Naive thymus-derived CD4-positive, alpha-beta T cell (primary cell): ENCODE measurements at regions of chr5 and their contacts with region 1.

Region 1: GRCh38 chr5:140647042-140647341 is 438 bp downstream of the NDUFA2 start:
- DNase-seq: no peak
- ATAC-seq: no peak
- H3K4me3 ChIP-seq: peak overlapping the region; percentile 80
- H3K4me3 Mint-ChIP-seq: peak overlapping the region; percentile 88 to 100 (median 98)
- H3K27ac ChIP-seq: peak overlapping the region; percentile 95
- H3K27ac Mint-ChIP-seq: peak overlapping the region; percentile 93 to 100 (median 99)
- H3K4me1 ChIP-seq: peaks cover 18% of the 10 kb centered on the region in 2 donors
- H3K4me1 Mint-ChIP-seq: peaks cover 32 to 72% (median 61%) of the 10 kb centered on the region in 7 donors
- H3K27me3 ChIP-seq: no peaks in the 10 kb centered on the region
- H3K27me3 Mint-ChIP-seq: no peaks in the 10 kb centered on the region

Region 2: GRCh38 chr5:140557136-140557805 is 89.7 kb before region 1 on chr5 and contains the start of gene SRA1:
- CTCF ChIA-PET with region 1: interaction called, 3 read pairs
- POLR2A ChIA-PET with region 1: interaction called, 10 read pairs
- intact Hi-C with region 1: loop called in 1 of 2 experiments (anchors 2 kb)
- DNase-seq: peak; percentile 62 to 91 (median 72)
- ATAC-seq: peak; percentile 94
- H3K4me3 ChIP-seq: peak within 1 kb of the TSS; percentile 73
- H3K4me3 Mint-ChIP-seq: peak within 1 kb of the TSS; percentile 84 to 93 (median 92)
- H3K27ac ChIP-seq: peak within 1 kb of the TSS; percentile 97
- H3K27ac Mint-ChIP-seq: peak within 1 kb of the TSS; percentile 85 to 97 (median 95)
- H3K4me1 ChIP-seq: peaks cover 14 to 20% of the 10 kb centered on the region in 2 donors
- H3K4me1 Mint-ChIP-seq: peaks cover 45 to 63% (median 50%) of the 10 kb centered on the region in 7 donors
- H3K27me3 ChIP-seq: no peaks in the 10 kb centered on the region
- H3K27me3 Mint-ChIP-seq: no peaks in the 10 kb centered on the region
- total RNA-seq, gene SRA1: 23.8 to 45.5 (median 34.0) TPM

Region 3: GRCh38 chr5:140632150-140633020 is 14.6 kb before region 1 on chr5:
- CTCF ChIA-PET with region 1: interaction called, 5 read pairs
- POLR2A ChIA-PET with region 1: interaction called, 34 read pairs
- intact Hi-C with region 1: loop called in 1 of 2 experiments (anchors 1 kb)
- DNase-seq: peak; percentile 29 to 64 (median 51)
- ATAC-seq: peak; percentile 81
- H3K4me3 ChIP-seq: peak overlapping the region; percentile 87
- H3K4me3 Mint-ChIP-seq: peak overlapping the region; percentile 89 to 99 (median 92)
- H3K27ac ChIP-seq: peak overlapping the region; percentile 41
- H3K27ac Mint-ChIP-seq: peak overlapping the region; percentile 29 to 88 (median 79)
- H3K4me1 ChIP-seq: peaks cover 0 to 9% of the 10 kb centered on the region in 2 donors
- H3K4me1 Mint-ChIP-seq: peaks cover 16 to 36% (median 17%) of the 10 kb centered on the region in 7 donors
- H3K27me3 ChIP-seq: no peaks in the 10 kb centered on the region
- H3K27me3 Mint-ChIP-seq: peaks cover 0 to 26% (median 0%) of the 10 kb centered on the region in 5 donors

Region 4: GRCh38 chr5:140658870-140659269 is 11.9 kb after region 1 on chr5:
- CTCF ChIA-PET with region 1: no interaction called
- POLR2A ChIA-PET with region 1: interaction called, 41 read pairs
- intact Hi-C with region 1: loop called (anchors 1 kb)
- DNase-seq: no peak
- ATAC-seq: no peak
- H3K4me3 ChIP-seq: no peak overlapping the region
- H3K4me3 Mint-ChIP-seq: no peak overlapping the region
- H3K27ac ChIP-seq: no peak overlapping the region
- H3K27ac Mint-ChIP-seq: peak overlapping the region in 6 of 9 donors; percentile 4 to 84 (median 50)
- H3K4me1 ChIP-seq: no peaks in the 10 kb centered on the region
- H3K4me1 Mint-ChIP-seq: peaks cover 7 to 18% (median 11%) of the 10 kb centered on the region in 7 donors
- H3K27me3 ChIP-seq: no peaks in the 10 kb centered on the region
- H3K27me3 Mint-ChIP-seq: no peaks in the 10 kb centered on the region

Region 5: DNA sequence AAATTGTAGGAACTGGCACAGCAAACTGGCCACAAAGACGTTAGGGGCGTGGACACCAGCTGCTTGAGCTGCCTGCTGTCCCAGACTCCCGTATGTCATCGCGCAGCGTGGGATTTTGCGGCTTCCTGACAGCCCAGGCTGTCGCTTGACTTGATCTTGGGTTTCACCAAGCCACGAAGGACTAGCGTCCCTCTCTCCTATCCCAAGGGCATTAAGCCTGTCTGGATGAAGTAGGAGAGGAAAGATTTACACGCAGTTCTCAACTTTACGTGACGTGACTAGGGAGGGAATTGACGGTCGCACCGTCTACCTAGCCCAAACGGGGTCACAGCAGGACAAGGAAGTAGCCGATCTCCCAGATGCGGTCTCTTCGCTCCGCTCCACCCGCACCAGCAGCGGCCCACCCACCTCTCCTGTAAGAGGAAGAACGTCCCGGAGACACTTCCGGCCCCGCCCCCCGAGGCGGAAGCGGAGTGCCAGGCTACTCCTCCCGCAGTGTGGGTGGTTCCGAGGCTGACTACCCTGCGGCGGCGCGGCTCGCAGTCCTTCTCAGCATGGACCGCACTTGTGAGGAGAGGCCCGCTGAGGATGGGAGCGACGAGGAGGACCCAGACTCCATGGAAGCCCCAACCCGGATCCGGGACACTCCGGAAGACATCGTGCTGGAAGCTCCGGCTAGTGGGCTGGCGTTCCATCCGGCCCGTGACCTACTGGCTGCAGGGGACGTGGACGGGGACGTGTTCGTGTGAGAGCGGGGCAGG is 17.5 kb after region 1 on chr5 and contains the start of gene WDR55:
- CTCF ChIA-PET with region 1: interaction called, 3 read pairs
- POLR2A ChIA-PET with region 1: interaction called, 41 read pairs
- intact Hi-C with region 1: loop called (anchors 1 kb)
- DNase-seq: peak; percentile 91 to 98 (median 94)
- ATAC-seq: peak; percentile 97
- H3K4me3 ChIP-seq: peak within 1 kb of the TSS; percentile 95
- H3K4me3 Mint-ChIP-seq: peak within 1 kb of the TSS; percentile 96 to 100 (median 98)
- H3K27ac ChIP-seq: peak within 1 kb of the TSS; percentile 97
- H3K27ac Mint-ChIP-seq: peak within 1 kb of the TSS; percentile 93 to 100 (median 98)
- H3K4me1 ChIP-seq: peaks cover 0 to 8% of the 10 kb centered on the region in 2 donors
- H3K4me1 Mint-ChIP-seq: peaks cover 17 to 48% (median 38%) of the 10 kb centered on the region in 7 donors
- H3K27me3 ChIP-seq: no peaks in the 10 kb centered on the region
- H3K27me3 Mint-ChIP-seq: no peaks in the 10 kb centered on the region
- total RNA-seq, gene WDR55: 28.5 to 47.6 (median 37.8) TPM

Region 6: DNA sequence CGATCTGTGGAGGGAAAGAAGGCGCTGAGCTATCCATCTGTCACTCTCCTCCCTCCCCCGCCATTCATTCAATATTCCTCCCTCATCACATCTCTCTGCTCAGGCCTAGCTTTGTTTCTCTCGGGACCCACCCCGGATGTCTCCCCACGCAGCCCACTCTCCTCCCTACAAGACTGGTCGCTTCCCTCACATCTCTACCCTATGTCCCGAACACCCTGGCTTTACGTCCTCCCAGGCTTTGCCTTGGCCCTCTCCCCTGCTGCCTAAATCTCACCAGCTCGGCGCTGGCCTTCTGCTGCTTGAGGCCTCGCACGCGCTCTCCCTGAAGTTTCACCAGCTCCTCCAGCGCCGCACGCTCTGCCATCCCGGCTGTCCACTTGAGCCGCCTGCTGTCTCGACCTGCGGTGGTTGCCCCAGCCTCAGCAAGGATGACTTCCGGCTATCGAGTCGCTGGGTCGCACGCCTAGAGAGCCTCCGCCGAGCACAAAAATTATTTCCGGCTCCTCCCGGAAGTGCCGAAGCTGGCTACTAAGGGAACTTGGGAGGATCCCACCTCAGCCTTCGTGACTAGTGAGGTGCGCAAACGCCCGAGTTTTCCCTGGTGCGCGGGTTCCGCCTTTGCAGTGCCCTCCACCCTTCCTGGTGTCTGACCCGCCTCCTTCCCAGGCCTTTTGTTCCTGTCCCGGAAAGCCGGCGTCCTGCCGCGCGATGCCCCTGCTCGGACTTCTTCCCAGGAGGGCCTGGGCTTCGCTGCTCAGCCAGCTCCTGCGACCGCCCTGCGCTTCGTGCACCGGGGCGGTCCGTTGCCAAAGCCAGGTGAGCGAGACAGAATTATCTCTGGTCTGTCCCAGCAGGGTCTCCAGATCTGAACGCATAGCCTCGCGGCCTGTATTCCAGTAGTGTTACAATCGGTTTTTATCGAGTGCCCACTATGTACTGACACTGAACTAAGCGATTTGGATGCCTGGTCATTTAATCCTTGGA is 44.2 kb after region 1 on chr5 and contains the starts of genes HARS1 and HARS2:
- CTCF ChIA-PET with region 1: no interaction called
- POLR2A ChIA-PET with region 1: interaction called, 31 read pairs
- intact Hi-C with region 1: loop called (anchors 1 kb)
- DNase-seq: peak; percentile 55 to 83 (median 71)
- ATAC-seq: peak; percentile 97
- H3K4me3 ChIP-seq: peak within 1 kb of the TSS; percentile 91
- H3K4me3 Mint-ChIP-seq: peak within 1 kb of the TSS; percentile 92 to 100 (median 99)
- H3K27ac ChIP-seq: peak within 1 kb of the TSS; percentile 89
- H3K27ac Mint-ChIP-seq: peak within 1 kb of the TSS; percentile 91 to 99 (median 98)
- H3K4me1 ChIP-seq: peaks cover 16 to 22% of the 10 kb centered on the region in 2 donors
- H3K4me1 Mint-ChIP-seq: peaks cover 29 to 60% (median 53%) of the 10 kb centered on the region in 7 donors
- H3K27me3 ChIP-seq: no peaks in the 10 kb centered on the region
- H3K27me3 Mint-ChIP-seq: no peaks in the 10 kb centered on the region
- total RNA-seq, gene HARS1: 48.7 to 85.7 (median 68.5) TPM
- total RNA-seq, gene HARS2: 25.4 to 59.6 (median 38.8) TPM

Region 7: DNA sequence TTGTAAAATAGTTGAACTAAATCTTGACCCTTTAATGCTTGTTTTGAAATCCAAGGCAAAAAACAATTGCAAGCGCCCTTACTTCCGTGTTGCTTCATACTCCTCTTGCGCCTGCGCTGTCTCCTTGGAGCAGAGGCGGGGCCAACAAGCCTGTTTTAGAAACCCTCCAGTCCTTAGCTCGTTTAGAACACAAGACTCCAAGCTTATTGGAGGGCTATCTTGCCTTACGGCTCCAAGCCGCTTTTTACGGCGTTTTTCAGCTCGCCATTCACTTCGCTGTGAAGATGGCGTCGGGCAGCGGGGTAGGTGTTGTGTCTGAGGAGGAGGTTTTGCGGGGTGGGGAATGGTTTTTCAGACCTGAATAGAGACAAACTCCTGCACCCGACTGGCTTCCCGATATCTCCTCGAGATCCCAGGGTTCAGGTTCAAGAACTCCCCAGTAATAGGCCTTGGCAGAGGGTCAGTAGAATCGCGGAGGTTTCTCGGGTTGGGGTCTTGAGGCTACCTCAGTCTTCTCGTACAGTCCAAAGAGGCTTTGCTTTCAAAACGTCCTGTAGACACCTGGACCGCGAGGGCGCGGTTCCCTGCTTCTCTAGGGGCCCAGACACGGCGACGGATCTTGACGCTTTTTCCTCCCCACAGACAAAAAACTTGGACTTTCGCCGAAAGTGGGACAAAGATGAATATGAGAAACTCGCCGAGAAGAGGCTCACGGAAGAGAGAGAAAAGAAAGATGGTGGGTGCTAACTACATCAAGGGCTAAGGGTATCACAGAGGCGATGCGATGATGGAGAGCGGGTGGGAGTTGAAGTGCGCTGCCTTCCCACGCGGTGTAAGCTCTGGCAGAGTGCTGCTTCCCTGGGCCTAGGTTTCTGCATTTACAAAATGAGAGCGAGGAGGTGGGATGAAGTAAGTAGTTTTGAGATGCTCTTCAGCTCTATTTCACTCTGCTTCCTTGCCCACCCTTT is 53.5 kb after region 1 on chr5 and contains the start of gene ZMAT2:
- CTCF ChIA-PET with region 1: no interaction called
- POLR2A ChIA-PET with region 1: interaction called, 15 read pairs
- intact Hi-C with region 1: loop called (anchors 1 kb)
- DNase-seq: peak; percentile 74 to 97 (median 92)
- ATAC-seq: peak; percentile 100
- H3K4me3 ChIP-seq: peak within 1 kb of the TSS; percentile 78
- H3K4me3 Mint-ChIP-seq: peak within 1 kb of the TSS; percentile 93 to 100 (median 98)
- H3K27ac ChIP-seq: peak within 1 kb of the TSS; percentile 87
- H3K27ac Mint-ChIP-seq: peak within 1 kb of the TSS; percentile 90 to 99 (median 97)
- H3K4me1 ChIP-seq: peaks cover 4 to 14% of the 10 kb centered on the region in 2 donors
- H3K4me1 Mint-ChIP-seq: peaks cover 18 to 35% (median 29%) of the 10 kb centered on the region in 7 donors
- H3K27me3 ChIP-seq: no peaks in the 10 kb centered on the region
- H3K27me3 Mint-ChIP-seq: no peaks in the 10 kb centered on the region
- total RNA-seq, gene ZMAT2: 37.7 to 63.0 (median 55.1) TPM